ENCODE measurements at regions of chr15 and their contacts with region 1.

Region 1: DNA sequence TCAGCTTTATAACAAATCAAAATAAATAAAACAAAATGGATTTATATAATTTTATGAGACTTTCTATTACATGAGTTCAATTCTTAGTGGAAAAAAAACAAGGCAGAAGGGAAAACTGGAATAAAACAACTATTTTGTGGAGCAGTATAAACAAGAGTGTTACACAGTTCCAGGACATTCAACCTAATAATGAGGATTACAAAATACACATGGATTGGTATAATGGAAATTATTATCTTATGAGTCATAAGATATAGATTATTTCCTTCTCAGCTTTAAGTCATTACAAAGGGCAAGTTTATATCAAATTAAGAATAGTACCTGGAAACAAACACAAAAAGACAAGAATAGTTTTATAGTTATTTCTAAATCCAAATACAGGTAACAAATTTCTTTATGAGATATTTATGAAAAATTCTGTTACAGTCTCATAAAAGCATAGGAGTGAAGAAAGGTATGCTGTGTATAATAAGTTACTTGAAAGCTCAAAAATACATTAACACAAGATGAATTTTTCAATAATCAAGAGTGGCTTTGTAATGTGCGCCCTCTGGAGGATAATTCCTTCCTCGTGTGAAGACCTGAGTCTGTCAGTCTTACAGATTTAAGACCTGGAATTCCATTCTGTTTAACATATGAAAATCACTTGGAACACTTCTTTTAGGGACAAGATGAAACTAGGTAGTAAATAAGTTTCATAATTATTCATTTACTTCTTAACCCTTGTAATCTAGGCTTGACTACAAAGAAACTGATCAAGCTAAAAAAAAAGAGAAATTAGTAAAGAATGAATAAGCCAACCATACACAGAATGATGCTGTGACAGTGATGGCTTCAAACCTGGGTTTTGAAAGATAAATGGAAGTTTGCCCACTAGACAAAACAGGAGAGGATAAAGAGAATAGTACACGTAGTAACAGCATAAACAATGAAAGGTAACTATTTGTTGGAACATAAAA is 9.5 kb downstream of the COPS2 start:
- DNase-seq: no peak
- ATAC-seq: peak; percentile 55
- H3K4me3 ChIP-seq: no peak overlapping the region
- H3K27ac ChIP-seq: no peak overlapping the region
- H3K4me1 ChIP-seq: peaks cover 26% of the 10 kb centered on the region
- H3K27me3 ChIP-seq: no peaks in the 10 kb centered on the region
- CTCF ChIP-seq: peak; percentile 72

Region 2: DNA sequence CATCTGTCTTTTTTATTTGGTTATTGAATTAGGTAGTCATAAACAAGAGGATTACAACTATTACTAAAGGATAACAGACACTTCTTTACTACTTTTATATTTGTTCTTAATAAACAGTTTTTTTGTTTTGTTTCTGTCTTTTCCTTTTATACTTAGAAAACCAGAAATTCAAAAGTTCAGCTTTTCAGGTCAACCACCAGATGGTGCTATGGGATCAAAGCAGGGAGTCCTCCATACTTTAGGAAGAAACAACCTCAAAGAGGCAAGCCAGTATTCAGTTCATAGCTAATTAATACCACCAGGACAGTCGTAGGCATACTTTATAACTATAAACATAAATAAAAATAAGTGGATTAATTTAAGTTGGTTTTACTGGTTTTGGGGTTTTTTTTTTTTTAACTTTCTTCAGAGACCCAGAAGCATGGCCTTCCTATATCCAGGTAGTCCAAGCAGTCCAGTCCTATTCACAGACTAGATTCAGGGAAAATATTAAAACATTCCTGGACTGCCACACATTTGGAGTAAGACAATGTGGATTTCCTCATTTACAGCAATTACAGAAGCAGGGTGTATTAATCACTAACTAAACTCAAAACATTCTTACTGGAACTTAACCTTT is 284.0 kb before region 1 on chr15:
- intact Hi-C with region 1: loop called (anchors 10 kb)
- DNase-seq: no peak
- ATAC-seq: peak; percentile 84
- H3K4me3 ChIP-seq: no peak overlapping the region
- H3K27ac ChIP-seq: no peak overlapping the region
- H3K4me1 ChIP-seq: no peaks in the 10 kb centered on the region
- H3K27me3 ChIP-seq: no peaks in the 10 kb centered on the region
- CTCF ChIP-seq: peak; percentile 95

Region 3: DNA sequence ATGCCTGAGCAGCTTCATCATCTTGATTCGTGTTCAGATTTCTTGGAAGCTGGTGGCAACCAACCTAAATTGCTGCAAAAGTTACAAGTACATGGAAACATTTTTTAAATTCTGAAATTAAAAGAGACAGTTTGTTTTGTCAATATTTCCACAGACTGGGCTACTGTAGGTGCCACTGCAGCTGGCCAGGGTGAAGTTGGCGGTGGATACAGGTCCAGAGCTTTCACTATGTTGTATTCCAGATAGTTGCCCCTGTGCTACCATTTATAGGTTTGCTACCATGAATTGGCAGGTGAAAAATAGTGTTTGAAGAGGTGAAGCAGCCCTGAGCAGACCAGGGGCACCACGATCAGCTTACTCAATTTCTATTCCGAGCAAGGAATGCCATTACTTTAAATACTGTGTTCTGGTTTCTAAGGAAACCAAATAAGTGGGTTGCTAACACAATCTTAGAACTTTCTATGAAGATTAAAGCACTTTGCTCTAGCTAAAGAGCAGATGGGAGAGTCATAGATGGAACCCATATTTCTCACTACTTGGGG is 161.0 kb before region 1 on chr15:
- intact Hi-C with region 1: no loop called
- DNase-seq: no peak
- ATAC-seq: no peak
- H3K4me3 ChIP-seq: no peak overlapping the region
- H3K27ac ChIP-seq: no peak overlapping the region
- H3K4me1 ChIP-seq: no peaks in the 10 kb centered on the region
- H3K27me3 ChIP-seq: no peaks in the 10 kb centered on the region
- CTCF ChIP-seq: no peak

Region 4: DNA sequence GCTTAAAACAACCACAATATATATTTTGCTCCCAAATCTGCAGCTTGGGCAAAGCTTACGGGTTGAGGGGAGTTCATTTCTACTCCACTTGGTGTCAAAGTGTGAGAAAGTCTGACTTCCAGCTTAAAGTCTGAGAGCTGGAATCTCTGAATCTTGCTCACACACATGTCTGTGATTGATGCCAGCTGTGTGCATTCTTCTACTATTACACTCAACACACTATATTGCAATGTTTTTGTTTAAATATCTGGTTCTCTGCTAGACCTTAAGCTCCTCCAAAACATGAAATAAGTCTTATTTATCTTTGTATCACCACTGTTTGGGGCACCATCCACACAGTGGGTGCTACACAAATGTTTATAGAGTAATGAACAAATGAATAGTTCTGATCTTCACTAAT is 63.0 kb before region 1 on chr15:
- intact Hi-C with region 1: no loop called
- DNase-seq: no peak
- ATAC-seq: no peak
- H3K4me3 ChIP-seq: no peak overlapping the region
- H3K27ac ChIP-seq: peak overlapping the region; percentile 74
- H3K4me1 ChIP-seq: peaks cover 8% of the 10 kb centered on the region
- H3K27me3 ChIP-seq: no peaks in the 10 kb centered on the region
- CTCF ChIP-seq: no peak

Region 5: DNA sequence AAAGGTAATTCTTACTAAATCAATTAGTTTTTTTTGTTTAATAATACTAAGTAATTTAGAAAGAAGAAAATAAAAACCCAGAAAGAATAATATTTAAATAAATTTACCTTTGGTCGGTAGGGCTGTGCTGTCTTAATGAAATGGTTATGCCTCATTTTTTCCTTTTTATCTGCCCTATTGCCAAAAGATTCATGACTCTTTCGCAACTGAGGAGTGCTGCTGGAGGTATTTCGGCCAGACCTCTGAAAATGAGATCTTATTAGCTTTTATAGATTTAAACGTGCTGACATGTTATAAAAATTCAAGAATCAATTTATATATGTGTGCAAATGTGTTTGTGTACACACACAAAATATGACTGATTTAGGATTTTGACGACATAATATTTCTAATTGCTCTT is 1467.7 kb after region 1 on chr15:
- intact Hi-C with region 1: no loop called
- DNase-seq: no peak
- ATAC-seq: no peak
- H3K4me3 ChIP-seq: no peak overlapping the region
- H3K27ac ChIP-seq: no peak overlapping the region
- H3K4me1 ChIP-seq: no peaks in the 10 kb centered on the region
- H3K27me3 ChIP-seq: no peaks in the 10 kb centered on the region
- CTCF ChIP-seq: no peak